ENCODE measurements at regions of chr5 and their contacts with region 1.

Region 1: GRCh38 chr5:147504011-147504410 is 5.9 kb downstream of the DPYSL3 start:
- DNase-seq: no peak
- H3K4me3 ChIP-seq: no peak overlapping the region
- H3K27ac ChIP-seq: peak overlapping the region; percentile 55 to 94 (median 92)
- H3K4me1 ChIP-seq: peaks cover 0 to 47% (median 32%) of the 10 kb centered on the region in 4 donors
- H3K27me3 ChIP-seq: no peaks in the 10 kb centered on the region
- CTCF ChIP-seq: no peak
- EP300 ChIP-seq: no peak
- POLR2A ChIP-seq: no peak

Region 2: GRCh38 chr5:147303976-147304375 is 200.0 kb before region 1 on chr5:
- intact Hi-C with region 1: no loop called
- DNase-seq: no peak
- H3K4me3 ChIP-seq: no peak overlapping the region
- H3K27ac ChIP-seq: no peak overlapping the region
- H3K4me1 ChIP-seq: no peaks in the 10 kb centered on the region
- H3K27me3 ChIP-seq: no peaks in the 10 kb centered on the region
- CTCF ChIP-seq: no peak
- EP300 ChIP-seq: no peak
- POLR2A ChIP-seq: no peak

Region 3: DNA sequence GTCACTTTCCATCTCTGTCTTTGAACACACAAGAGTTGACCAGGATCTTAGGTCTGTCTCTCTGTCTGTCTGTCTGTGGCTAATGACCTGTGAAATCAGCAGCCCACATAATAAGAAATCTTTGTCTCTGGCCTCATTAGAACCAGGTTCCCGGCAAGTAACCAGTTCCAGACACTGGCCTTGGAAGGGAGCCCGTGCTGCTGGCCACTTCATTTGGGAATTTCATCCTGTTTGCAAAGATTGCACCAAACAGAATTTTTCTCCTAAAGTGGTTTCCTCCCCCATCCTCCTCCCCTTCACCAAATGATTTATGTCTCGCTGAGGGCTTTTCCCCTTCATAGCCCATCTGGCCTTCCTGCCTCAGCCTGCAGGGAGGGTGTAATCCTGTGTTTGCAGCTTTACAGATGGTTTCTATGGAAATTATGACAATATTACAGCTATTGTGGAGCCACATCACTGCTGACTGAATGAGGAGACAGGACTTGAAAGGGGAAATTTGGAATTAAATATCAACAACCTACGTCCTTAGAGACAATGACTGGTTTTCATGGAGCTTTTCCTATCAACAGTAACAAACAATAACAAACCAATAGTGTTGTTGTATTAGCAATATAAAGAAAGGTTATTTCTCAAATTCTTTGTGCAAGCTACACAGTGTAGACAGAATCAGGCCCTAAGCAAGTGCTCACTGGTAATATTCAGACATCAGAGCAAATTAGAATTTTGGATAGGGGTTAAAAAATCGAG is 19.9 kb before region 1 on chr5:
- intact Hi-C with region 1: loop called (anchors 2 kb)
- DNase-seq: peak; percentile 89
- H3K4me3 ChIP-seq: no peak overlapping the region
- H3K27ac ChIP-seq: peak overlapping the region; percentile 61 to 84 (median 68)
- H3K4me1 ChIP-seq: peaks cover 0 to 63% (median 50%) of the 10 kb centered on the region in 4 donors
- H3K27me3 ChIP-seq: no peaks in the 10 kb centered on the region
- CTCF ChIP-seq: no peak
- EP300 ChIP-seq: no peak
- POLR2A ChIP-seq: no peak